ENCODE measurements at regions of chr2 and their contacts with region 1.

Region 1: GRCh38 chr2:26184555-26185303 is 11.8 kb downstream of the GAREM2 start:
- DNase-seq: peak; percentile 94
- ATAC-seq: peak; percentile 99
- H3K4me3 Mint-ChIP-seq: peak overlapping the region; percentile 81
- H3K27ac Mint-ChIP-seq: peak overlapping the region; percentile 73
- H3K4me1 Mint-ChIP-seq: peaks cover 16% of the 10 kb centered on the region
- H3K27me3 Mint-ChIP-seq: peaks cover 12% of the 10 kb centered on the region

Region 2: DNA sequence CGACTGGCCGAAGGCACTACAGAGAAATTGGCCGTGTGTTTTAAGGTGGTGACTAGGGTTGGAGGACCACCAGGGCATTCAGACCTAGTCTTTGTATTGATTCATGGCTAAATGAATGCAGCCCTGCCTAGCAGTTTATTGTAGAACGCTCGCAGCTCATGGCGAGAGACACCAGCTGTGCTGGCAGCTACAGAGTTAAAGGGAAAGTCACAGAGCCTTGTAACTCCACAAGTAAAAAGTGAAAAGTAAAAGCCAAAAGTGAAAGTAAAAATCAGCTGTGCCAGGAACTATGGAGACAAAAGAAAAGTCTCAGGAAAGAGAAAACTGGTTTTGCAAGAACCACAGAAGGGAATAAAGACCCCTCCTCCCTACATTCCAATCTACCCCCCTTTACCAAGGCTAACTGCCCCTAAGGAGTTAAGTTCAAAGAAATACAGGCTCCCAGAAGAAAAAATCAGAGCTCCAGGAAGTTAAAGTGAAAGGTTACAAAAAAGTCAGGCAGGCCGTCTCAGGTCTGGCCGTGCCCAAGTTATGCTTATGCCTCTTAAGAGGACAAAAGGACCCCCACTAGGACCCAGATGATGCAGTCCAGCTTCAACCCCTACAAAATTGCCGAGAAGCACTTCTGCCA is 114.9 kb after region 1 on chr2:
- POLR2A ChIA-PET with region 1: interaction called, 10 read pairs
- DNase-seq: peak; percentile 47
- ATAC-seq: peak; percentile 55
- H3K4me3 Mint-ChIP-seq: no peak overlapping the region
- H3K27ac Mint-ChIP-seq: no peak overlapping the region
- H3K4me1 Mint-ChIP-seq: no peaks in the 10 kb centered on the region
- H3K27me3 Mint-ChIP-seq: peaks cover 2% of the 10 kb centered on the region

Measured in activated naive CD8-positive, alpha-beta T cell treated with anti-CD3 and anti-CD28 coated beads, Interleukin-2, amount 10 ng/mL, durations not matched to agents 7 days and 5 days (primary cell).